WTC11 (cell line): ENCODE measurements at regions of chr2 and their contacts with region 1.

Region 1: GRCh38 chr2:127067620-127068350 is 39.2 kb downstream of the BIN1 start:
- DNase-seq: peak; percentile 80
- ATAC-seq: peak; percentile 75
- H3K4me3 Mint-ChIP-seq: no peak overlapping the region
- H3K27ac Mint-ChIP-seq: no peak overlapping the region
- H3K4me1 Mint-ChIP-seq: 0 out of 2 replicates have a peak, but pooled peaks cover 5% of the 10 kb centered on the region
- H3K27me3 Mint-ChIP-seq: no peaks in the 10 kb centered on the region
- CTCF ChIP-seq: peak; percentile 75

Region 2: GRCh38 chr2:127014630-127015029 is 53.2 kb before region 1 on chr2:
- CTCF ChIA-PET with region 1: no interaction called
- POLR2A ChIA-PET with region 1: no interaction called
- DNase-seq: no peak
- ATAC-seq: no peak
- H3K4me3 Mint-ChIP-seq: no peak overlapping the region
- H3K27ac Mint-ChIP-seq: no peak overlapping the region
- H3K4me1 Mint-ChIP-seq: 0 out of 2 replicates have a peak, but pooled peaks cover 10% of the 10 kb centered on the region
- H3K27me3 Mint-ChIP-seq: peaks cover 5% of the 10 kb centered on the region
- CTCF ChIP-seq: no peak

Region 3: DNA sequence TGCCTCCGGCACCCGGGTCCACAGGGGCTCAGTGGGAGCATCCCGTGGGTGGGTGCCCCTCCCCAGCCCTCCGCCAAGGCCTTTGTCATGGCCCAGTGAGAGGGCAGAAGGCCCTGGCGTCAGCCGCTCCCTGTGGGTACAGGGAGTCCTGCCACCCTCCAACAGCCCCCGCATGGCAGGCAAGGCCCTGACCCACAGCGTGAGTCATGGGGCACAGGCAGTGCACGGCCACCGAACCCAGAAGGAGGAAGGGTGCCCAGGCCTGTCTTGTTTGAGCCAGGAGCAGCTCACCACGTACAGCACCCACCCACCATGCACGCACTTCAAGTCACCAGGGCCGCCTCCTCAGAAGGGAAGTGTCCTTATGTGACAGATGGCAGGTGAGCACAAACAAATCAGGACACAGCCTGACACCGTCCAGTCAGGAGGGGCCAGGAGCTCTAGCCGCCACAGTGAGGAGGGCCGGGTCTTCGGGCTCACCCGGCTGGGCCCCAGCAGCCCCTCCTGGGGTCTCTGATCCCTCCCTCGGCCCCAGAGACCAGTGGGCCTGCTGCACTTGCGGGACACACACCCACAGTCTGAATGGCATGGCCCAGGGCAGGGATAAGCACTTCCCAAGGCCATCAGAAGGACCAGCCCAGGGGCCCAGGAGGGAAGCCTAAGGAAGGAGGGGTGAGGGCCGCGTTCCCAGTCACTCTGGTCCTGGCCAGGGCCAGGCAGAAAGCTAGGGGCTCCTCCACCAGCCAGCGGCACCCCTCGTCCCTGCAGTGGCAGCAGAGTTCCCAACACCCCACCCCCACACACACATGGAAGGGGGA is 13.4 kb after region 1 on chr2:
- CTCF ChIA-PET with region 1: interaction called, 25 read pairs
- POLR2A ChIA-PET with region 1: no interaction called
- DNase-seq: no peak
- ATAC-seq: no peak; the same call in 1 of the 2 replicates
- H3K4me3 Mint-ChIP-seq: no peak overlapping the region
- H3K27ac Mint-ChIP-seq: no peak overlapping the region
- H3K4me1 Mint-ChIP-seq: peaks cover 44% of the 10 kb centered on the region
- H3K27me3 Mint-ChIP-seq: no peaks in the 10 kb centered on the region
- CTCF ChIP-seq: no peak

Region 4: GRCh38 chr2:127094509-127095366 is 27.0 kb after region 1 on chr2:
- CTCF ChIA-PET with region 1: interaction called, 19 read pairs
- POLR2A ChIA-PET with region 1: no interaction called
- DNase-seq: peak; percentile 35
- ATAC-seq: peak; percentile 66
- H3K4me3 Mint-ChIP-seq: no peak overlapping the region
- H3K27ac Mint-ChIP-seq: no peak overlapping the region
- H3K4me1 Mint-ChIP-seq: peaks cover 41% of the 10 kb centered on the region
- H3K27me3 Mint-ChIP-seq: no peaks in the 10 kb centered on the region
- CTCF ChIP-seq: no peak

Region 5: GRCh38 chr2:127157651-127158470 is 90.1 kb after region 1 on chr2:
- CTCF ChIA-PET with region 1: interaction called, 32 read pairs
- POLR2A ChIA-PET with region 1: no interaction called
- DNase-seq: peak; percentile 78
- ATAC-seq: peak; percentile 98
- H3K4me3 Mint-ChIP-seq: no peak overlapping the region
- H3K27ac Mint-ChIP-seq: no peak overlapping the region
- H3K4me1 Mint-ChIP-seq: peaks cover 20% of the 10 kb centered on the region
- H3K27me3 Mint-ChIP-seq: no peaks in the 10 kb centered on the region
- CTCF ChIP-seq: no peak; the same call in 1 of the 2 replicates